ENCODE measurements at regions of chr17 and their contacts with region 1.

Region 1: GRCh38 chr17:29219378-29220047 is 27.1 kb upstream of the CRYBA1 start:
- DNase-seq: peak; percentile 86 to 97
- ATAC-seq: peak; percentile 97 to 99
- H3K4me3 ChIP-seq: no peak overlapping the region
- H3K27ac ChIP-seq: peak overlapping the region; percentile 5 to 67; a peak in 3 of 6 replicates
- H3K4me1 ChIP-seq: 0 out of 3 replicates have a peak, but pooled peaks cover 6% of the 10 kb centered on the region
- CTCF ChIP-seq: peak; percentile 99
- EP300 ChIP-seq: no peak
- POLR2A ChIP-seq: no peak
- RAD21 ChIP-seq: peak; percentile 87 to 94

Region 2: DNA sequence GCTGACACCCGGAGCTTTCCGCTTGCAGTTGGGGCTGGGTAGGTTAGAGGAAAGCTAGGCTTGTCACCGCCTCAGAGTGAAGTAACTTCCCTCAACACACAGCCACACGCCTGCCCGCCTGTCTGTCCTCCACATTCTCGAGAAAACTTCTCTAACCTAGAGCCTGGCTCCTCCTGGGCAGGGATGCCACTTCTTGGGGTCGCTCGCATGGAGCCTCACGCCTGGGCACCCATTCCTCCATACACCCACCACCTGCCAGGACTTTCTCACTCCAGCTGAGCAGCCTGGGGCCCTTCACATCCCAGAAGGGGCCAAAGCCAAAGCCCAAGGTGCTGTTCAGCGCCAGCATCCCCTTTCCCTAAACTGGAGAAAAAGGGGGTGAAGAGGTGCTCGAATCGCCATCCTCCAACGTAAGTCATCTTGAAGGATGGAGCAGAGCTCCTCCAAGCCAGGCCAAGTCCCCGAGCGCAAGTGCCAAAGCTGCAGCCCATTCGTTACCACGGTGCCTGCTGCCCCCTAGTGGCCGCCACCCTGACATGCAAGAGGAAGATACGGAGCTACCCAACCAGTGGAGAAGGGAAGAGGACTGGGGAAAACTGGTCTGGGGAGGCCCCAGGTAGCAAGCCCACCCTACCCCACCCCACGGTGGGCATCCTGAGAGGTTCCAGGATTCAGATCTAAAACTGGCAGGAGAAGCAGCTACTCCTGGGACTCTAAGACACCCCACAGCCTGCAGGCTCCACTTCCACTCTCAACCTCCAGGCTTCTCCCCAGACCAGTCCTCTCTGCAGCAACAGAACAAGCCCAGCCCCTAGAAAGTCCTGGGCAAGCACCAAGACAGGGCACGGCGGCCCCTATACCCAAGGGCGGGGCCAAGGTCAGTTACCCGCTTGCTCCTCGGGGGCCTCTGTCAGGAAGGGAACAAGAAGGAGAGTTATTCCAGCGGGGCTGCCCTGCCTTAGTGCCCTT is 102.4 kb before region 1 on chr17:
- CTCF ChIA-PET with region 1: interaction called, 81 read pairs
- POLR2A ChIA-PET with region 1: no interaction called
- DNase-seq: peak; percentile 76 to 82
- ATAC-seq: peak; percentile 65 to 82
- H3K4me3 ChIP-seq: no peak overlapping the region
- H3K27ac ChIP-seq: no peak overlapping the region
- H3K4me1 ChIP-seq: no peaks in the 10 kb centered on the region
- CTCF ChIP-seq: peak; percentile 94
- EP300 ChIP-seq: no peak
- POLR2A ChIP-seq: no peak
- RAD21 ChIP-seq: peak; percentile 75 to 82

Region 3: GRCh38 chr17:29148790-29149430 is 70.6 kb before region 1 on chr17:
- CTCF ChIA-PET with region 1: interaction called, 482 read pairs
- POLR2A ChIA-PET with region 1: interaction called, 8 read pairs
- DNase-seq: peak; percentile 92 to 95
- ATAC-seq: peak; percentile 87 to 95
- H3K4me3 ChIP-seq: peak overlapping the region; percentile 44
- H3K27ac ChIP-seq: peak overlapping the region; percentile 82 to 94
- H3K4me1 ChIP-seq: peaks cover 63% of the 10 kb centered on the region
- CTCF ChIP-seq: peak; percentile 98
- EP300 ChIP-seq: no peak
- POLR2A ChIP-seq: peak; percentile 84
- RAD21 ChIP-seq: peak; percentile 96 to 100

Region 4: DNA sequence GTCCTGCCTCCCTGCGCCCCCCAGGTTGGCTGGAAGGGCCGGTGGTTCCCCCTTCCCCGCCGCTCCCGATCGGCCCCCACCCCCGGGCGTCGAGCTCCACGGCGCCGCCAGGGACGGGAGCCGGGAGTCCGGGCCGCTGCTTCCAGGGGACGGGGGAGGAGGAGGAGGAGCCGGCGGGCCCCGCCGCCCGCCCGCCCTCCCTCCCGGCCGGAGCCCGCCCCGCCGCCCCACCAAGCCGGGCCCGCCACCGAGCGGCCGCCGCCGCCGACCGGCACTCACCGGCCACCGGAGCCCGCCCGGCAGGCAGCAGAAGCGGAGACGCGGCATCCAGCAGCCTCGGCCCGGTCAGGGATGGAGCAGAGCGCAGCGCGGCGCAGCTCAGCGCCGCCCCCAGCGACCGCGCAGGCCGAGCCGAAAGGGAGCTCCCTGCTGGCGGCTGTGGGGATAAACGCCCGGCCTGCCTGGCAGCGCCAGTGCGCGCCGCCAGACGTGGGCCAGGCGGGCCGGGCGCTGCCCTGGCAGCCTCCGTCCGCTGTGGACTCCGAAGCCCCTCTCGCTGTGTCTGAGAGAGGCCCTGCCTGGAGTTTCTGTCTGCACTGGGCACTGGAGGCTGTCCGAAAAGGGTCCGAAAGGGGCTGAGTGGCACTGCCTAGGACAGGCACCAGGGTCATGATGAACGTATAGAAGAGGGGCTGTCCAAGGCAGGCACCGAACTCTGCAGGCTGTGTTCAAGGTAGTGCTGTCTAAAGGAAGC is 39.3 kb before region 1 on chr17 and contains the start of gene MYO18A:
- CTCF ChIA-PET with region 1: interaction called, 158 read pairs
- POLR2A ChIA-PET with region 1: interaction called, 7 read pairs
- DNase-seq: peak; percentile 82 to 92
- ATAC-seq: peak; percentile 78 to 81
- H3K4me3 ChIP-seq: peak within 1 kb of the TSS; percentile 60
- H3K27ac ChIP-seq: peak within 1 kb of the TSS; percentile 81 to 95
- H3K4me1 ChIP-seq: peaks cover 38% of the 10 kb centered on the region
- CTCF ChIP-seq: peak; percentile 95
- EP300 ChIP-seq: 0 out of 5 replicates have a peak, but pooled peaks of 1 of the 2 experiments have one; percentile 5
- POLR2A ChIP-seq: peak; percentile 70
- RAD21 ChIP-seq: peak; percentile 45 to 75
- polyA plus RNA-seq, gene MYO18A: 12.3 and 26.3 TPM in 2 replicates

Region 5: GRCh38 chr17:29241015-29241963 is 21.8 kb after region 1 on chr17:
- CTCF ChIA-PET with region 1: interaction called, 81 read pairs
- POLR2A ChIA-PET with region 1: no interaction called
- DNase-seq: peak; percentile 96 to 97
- ATAC-seq: peak; percentile 95 to 98
- H3K4me3 ChIP-seq: no peak overlapping the region
- H3K27ac ChIP-seq: peak overlapping the region; percentile 93
- H3K4me1 ChIP-seq: peaks cover 49% of the 10 kb centered on the region
- CTCF ChIP-seq: no peak
- EP300 ChIP-seq: peak in 1 of 2 experiments; percentile 71; a peak in 1 of 5 replicates
- POLR2A ChIP-seq: no peak
- RAD21 ChIP-seq: peak; percentile 27 to 45; a peak in 2 of 5 replicates

Region 6: GRCh38 chr17:29263916-29264315 is 44.4 kb after region 1 on chr17:
- CTCF ChIA-PET with region 1: interaction called, 59 read pairs
- POLR2A ChIA-PET with region 1: no interaction called
- DNase-seq: no peak
- ATAC-seq: no peak
- H3K4me3 ChIP-seq: no peak overlapping the region
- H3K27ac ChIP-seq: no peak overlapping the region
- H3K4me1 ChIP-seq: peaks cover 6% of the 10 kb centered on the region; the same call in 2 of the 3 replicates
- CTCF ChIP-seq: no peak
- EP300 ChIP-seq: no peak
- POLR2A ChIP-seq: no peak
- RAD21 ChIP-seq: no peak

Region 7: DNA sequence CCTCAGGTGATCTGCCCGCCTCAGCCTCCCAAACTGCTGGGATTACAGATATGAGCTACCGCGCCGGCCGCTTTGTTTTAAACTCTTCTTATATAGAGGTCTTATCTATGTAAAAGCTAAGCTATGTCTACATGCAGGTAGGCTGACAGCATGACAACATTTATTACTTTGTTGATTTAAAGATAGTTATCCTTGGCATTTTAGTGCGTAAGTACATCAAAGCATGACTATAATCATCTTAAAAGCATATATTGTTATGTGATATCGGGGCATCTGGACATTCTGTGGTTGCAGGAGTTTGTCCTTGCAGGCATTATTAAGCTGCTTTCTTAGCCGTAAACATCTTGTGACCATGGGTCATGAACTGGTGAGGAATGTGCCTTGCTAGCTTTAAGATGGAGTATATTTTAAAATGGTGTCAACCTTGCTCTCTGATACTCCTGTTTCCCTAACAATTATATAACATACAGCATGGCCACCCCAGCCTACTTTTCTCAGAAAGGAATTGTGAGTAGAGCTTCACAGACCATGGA is 124.9 kb after region 1 on chr17:
- CTCF ChIA-PET with region 1: no interaction called
- POLR2A ChIA-PET with region 1: no interaction called
- DNase-seq: no peak
- ATAC-seq: no peak
- H3K4me3 ChIP-seq: no peak overlapping the region
- H3K27ac ChIP-seq: no peak overlapping the region
- H3K4me1 ChIP-seq: no peaks in the 10 kb centered on the region
- CTCF ChIP-seq: no peak
- EP300 ChIP-seq: no peak
- POLR2A ChIP-seq: no peak
- RAD21 ChIP-seq: no peak